MCF 10A (cell line): ENCODE measurements at regions of chr10 and their contacts with region 1.

Region 1: DNA sequence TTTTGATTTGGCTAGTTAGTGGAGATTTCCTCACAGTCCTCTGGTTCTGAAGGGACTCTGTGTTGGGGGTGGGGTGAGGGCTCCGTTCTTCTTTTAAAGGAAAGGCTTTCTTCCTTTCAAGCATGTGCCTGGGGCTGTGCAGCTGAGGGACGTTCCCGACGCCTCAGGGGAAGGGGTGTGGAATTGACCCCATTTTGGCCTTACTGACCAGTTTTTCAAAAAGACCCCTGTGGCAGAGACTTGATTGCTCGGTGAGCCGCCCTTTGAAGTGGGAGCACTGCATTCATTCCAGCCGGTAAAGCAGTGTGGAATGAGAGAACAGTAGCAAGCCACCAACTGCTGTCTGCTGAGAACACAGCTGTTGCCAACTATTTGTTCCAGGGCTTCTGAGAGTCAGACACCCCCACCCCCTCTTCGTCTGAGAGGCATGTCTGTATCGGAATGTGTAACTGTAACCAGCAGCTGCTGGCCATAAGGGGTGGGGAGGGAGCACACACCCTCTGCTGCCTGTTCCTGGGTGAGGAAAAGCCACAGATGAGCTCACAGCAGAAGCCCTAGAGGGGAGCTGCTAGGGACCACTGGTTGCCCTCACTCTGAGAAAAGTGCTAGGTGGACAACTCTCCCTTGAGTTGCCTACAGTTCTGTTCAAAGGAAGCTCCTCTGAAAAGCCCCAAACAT is 33.2 kb downstream of the WBP1L start:
- DNase-seq: peak; percentile 94
- H3K4me3 Mint-ChIP-seq: peak overlapping the region; percentile 64
- H3K27ac Mint-ChIP-seq: peak overlapping the region; percentile 64
- H3K4me1 Mint-ChIP-seq: peaks cover 41% of the 10 kb centered on the region
- H3K27me3 Mint-ChIP-seq: no peaks in the 10 kb centered on the region
- CTCF ChIP-seq: no peak

Region 2: DNA sequence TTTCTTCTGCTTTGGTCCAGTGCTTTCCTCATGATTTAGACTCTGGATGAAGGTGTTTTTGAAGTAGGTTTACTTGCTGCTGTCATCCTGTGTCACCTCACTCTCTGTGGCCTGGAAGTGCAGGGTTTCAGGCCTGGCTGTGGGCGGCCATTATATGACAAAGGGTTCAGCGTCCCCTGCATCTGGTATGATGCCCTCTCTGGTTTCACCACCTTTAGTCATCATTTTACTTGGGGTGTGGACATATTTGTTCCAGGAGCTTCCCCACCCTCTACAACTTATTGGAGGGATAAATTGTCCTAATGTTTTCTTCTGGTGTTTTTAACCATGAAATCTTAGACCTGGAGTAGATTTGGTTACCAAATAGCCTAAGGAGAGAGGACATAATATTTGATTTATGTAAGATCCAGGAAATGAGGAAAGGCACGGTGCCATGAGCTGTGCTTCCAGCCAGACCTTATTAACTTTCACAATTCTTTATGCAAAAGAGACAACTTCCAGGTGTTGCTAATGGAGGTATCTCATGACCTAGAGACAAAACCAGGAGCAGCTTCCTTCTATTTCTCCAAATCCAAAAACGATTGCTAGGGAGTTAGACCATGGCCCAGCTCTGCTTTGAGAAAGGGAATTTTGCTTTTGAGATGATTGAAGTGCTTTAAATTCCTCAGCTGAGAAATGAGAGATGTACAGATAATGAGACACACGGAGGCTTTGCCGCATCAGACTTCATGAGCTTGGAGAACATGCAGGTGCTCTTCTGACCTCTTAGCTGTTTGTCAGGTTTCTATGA is 12.3 kb before region 1 on chr10:
- CTCF ChIA-PET with region 1: interaction called, 7 read pairs
- POLR2A ChIA-PET with region 1: interaction called, 100 read pairs
- intact Hi-C with region 1: no loop called
- DNase-seq: peak; percentile 43
- H3K4me3 Mint-ChIP-seq: no peak overlapping the region
- H3K27ac Mint-ChIP-seq: peak overlapping the region; percentile 42
- H3K4me1 Mint-ChIP-seq: peaks cover 24% of the 10 kb centered on the region
- H3K27me3 Mint-ChIP-seq: no peaks in the 10 kb centered on the region
- CTCF ChIP-seq: no peak